ENCODE measurements at regions of chr17 and their contacts with region 1.

Region 1: DNA sequence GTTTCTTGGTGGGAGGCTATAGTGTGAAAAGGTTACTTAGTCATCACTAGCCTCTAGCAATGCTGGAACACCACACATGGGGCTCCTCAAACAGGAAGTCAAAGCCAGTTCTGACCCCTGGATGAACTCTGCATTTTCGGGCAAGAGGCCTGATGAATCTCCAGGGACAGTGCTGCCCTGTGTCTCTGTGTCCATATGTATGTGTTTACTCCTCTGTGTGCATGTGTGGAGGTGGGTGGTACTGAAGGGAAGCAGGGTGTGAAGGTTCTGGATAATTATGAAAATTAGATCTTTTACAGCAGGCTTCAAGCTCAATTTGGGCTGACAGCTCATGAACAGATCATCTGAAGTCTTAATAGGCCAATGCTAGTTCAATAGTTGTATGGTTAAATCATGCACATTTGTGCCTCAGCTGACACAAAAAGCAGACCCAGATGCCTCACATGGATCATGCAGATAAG is 133.6 kb downstream of the SNX11 start:
- DNase-seq: peak; percentile 56
- H3K4me3 ChIP-seq: no peak overlapping the region
- H3K27ac ChIP-seq: peak overlapping the region; percentile 38
- H3K4me1 ChIP-seq: peaks cover 50% of the 10 kb centered on the region
- H3K27me3 ChIP-seq: no peaks in the 10 kb centered on the region
- CTCF ChIP-seq: no peak

Region 2: GRCh38 chr17:47895856-47896671 is 345.1 kb before region 1 on chr17 and contains the start of gene SP2:
- CTCF ChIA-PET with region 1: no interaction called
- dilution Hi-C with region 1: no loop called
- in situ Hi-C with region 1: no loop called
- intact Hi-C with region 1: no loop called
- DNase-seq: peak; percentile 100
- H3K4me3 ChIP-seq: peak within 1 kb of the TSS; percentile 86 to 97 (median 91)
- H3K27ac ChIP-seq: peak within 1 kb of the TSS; percentile 85
- H3K4me1 ChIP-seq: peaks cover 29% of the 10 kb centered on the region
- H3K27me3 ChIP-seq: no peaks in the 10 kb centered on the region
- CTCF ChIP-seq: no peak
- total RNA-seq, gene SP2: 1.5 to 14.9 TPM

Region 3: GRCh38 chr17:48139944-48140343 is 101.2 kb before region 1 on chr17:
- CTCF ChIA-PET with region 1: no interaction called
- dilution Hi-C with region 1: no loop called
- in situ Hi-C with region 1: no loop called
- intact Hi-C with region 1: no loop called
- DNase-seq: no peak
- H3K4me3 ChIP-seq: no peak overlapping the region
- H3K27ac ChIP-seq: no peak overlapping the region
- H3K4me1 ChIP-seq: no peaks in the 10 kb centered on the region
- H3K27me3 ChIP-seq: peaks cover 4% of the 10 kb centered on the region
- CTCF ChIP-seq: no peak

Region 4: DNA sequence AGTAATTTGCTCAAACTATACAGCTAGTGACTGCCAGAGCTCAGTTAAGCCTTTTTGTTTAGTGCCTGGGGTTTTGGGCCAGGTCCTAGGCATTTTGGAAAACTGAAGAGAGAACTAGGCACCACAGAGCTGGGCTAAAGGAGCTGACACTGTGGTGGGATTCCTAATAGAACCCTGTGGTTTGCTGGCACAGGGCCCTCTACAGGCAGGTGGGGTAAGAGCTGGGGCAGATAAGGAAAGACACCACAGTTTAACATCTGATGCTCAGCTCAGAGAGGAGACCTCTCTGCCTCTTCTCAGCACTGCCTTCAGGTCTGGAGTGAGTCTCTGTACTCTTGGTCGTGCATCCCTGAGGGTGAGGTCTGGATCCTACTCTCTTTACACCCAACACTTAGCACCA is 12.4 kb before region 1 on chr17:
- CTCF ChIA-PET with region 1: no interaction called
- dilution Hi-C with region 1: no loop called
- in situ Hi-C with region 1: no loop called
- intact Hi-C with region 1: no loop called
- DNase-seq: no peak
- H3K4me3 ChIP-seq: no peak overlapping the region
- H3K27ac ChIP-seq: no peak overlapping the region
- H3K4me1 ChIP-seq: no peaks in the 10 kb centered on the region
- H3K27me3 ChIP-seq: no peaks in the 10 kb centered on the region
- CTCF ChIP-seq: no peak

Region 5: GRCh38 chr17:48767263-48767774 is 526.2 kb after region 1 on chr17:
- CTCF ChIA-PET with region 1: no interaction called
- dilution Hi-C with region 1: loop called (anchors 10 kb)
- in situ Hi-C with region 1: no loop called
- intact Hi-C with region 1: no loop called
- DNase-seq: no peak
- H3K4me3 ChIP-seq: no peak overlapping the region
- H3K27ac ChIP-seq: no peak overlapping the region
- H3K4me1 ChIP-seq: no peaks in the 10 kb centered on the region
- H3K27me3 ChIP-seq: peaks cover 3% of the 10 kb centered on the region
- CTCF ChIP-seq: no peak

Region 6: GRCh38 chr17:48985436-48986245 is 744.5 kb after region 1 on chr17:
- CTCF ChIA-PET with region 1: no interaction called
- dilution Hi-C with region 1: no loop called
- in situ Hi-C with region 1: no loop called
- intact Hi-C with region 1: no loop called
- DNase-seq: no peak
- H3K4me3 ChIP-seq: no peak overlapping the region
- H3K27ac ChIP-seq: no peak overlapping the region
- H3K4me1 ChIP-seq: no peaks in the 10 kb centered on the region
- H3K27me3 ChIP-seq: peaks cover 7% of the 10 kb centered on the region
- CTCF ChIP-seq: no peak